KBM-7 (cell line): ENCODE measurements at regions of chrX and their contacts with region 1.

Region 1: GRCh38 chrX:84729809-84730208 is 227.6 kb upstream of the HDX start:
- DNase-seq: peak; percentile 67

Region 2: DNA sequence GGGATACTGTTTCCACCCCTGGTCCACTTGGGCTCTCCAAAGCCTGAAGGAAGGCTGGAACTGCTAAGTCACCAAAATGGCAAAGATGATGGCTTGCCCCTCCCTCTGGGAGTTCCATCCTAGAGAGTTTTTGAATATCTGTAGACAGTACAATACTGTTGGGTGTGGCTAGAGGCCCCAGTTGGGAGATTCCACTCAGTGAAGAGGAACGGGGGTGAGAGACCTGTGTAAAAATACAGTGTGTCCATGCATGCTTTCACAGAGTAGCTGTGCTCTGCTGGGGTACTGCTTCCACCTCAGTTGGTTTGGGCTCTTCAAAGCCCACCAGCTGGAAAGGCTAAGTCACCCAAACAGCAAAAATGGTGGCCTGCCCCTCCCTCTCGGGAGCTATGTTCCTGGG is 164.1 kb after region 1 on chrX:
- in situ Hi-C with region 1: loop called (anchors 10 kb)
- DNase-seq: no peak

Region 3: DNA sequence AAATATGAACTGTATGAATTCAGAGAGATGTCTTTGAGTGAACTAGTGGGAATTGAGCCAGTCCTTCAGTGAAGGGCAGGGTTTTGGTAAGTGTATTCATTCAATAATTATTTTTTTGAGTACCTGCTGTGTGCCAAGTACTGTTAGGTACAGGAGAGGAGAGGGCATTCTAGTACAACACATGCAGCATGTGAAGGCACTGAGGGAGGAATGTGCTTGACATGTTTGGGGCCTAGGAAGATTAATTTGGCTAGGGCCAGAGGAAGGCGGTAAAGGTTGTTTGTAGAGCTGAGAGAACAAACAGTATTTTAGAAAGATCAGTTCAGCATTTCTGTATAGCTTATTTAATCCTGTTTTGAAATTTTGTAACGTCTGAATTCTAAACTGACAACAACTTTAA is 301.7 kb after region 1 on chrX:
- in situ Hi-C with region 1: loop called (anchors 25 kb)
- DNase-seq: no peak